GM13977 (cell line): ENCODE measurements at regions of chr7 and their contacts with region 1.

Region 1: DNA sequence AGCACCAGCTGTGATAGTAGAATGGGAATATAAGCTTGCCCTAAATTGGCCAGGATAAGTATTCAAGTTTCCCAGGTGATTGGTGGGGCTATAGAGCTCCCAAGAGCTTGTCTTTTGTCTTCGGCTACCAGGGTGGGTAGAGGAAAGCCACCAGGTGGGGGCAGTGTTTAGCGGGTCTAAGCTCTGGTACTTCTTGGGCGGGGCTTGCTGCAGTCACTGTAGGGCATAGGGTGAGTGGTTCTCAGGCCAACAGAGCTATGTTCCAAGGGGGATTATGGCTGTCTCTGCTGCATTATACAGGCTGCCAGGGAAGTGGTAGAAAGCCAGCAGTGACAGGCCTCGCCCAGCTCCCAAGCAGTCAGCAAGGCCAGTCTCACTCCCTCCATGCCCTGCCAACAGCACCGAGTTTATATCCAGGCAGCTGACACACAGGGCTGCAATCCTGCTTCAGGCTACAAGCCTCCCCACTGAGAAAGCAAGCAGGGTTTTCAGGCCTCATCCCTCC is 110.7 kb downstream of the ZNF467 start:
- DNase-seq: peak; percentile 42
- CTCF ChIP-seq: peak; percentile 63

Region 2: DNA sequence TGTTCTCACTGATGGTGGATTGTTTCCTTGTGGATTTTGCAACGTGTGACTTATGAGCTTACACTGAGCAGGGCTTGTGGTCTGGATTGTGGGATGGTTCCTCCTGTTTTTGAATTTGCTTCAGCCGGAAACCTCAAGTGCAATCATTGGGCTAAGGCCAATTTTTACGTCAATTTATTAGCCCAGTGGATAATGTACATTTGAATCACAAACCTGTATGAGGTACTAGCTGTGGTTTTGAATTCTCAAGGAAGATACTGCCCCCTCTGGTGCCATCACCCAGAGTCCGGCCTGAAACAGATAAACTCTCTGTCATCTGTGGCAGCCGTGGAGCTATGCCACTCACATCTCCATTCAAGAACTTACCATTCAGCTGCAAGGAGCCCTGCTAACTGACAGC is 194.4 kb before region 1 on chr7:
- in situ Hi-C with region 1: no loop called
- DNase-seq: no peak
- CTCF ChIP-seq: no peak

Region 3: GRCh38 chr7:149547126-149547525 is 115.5 kb before region 1 on chr7:
- in situ Hi-C with region 1: no loop called
- DNase-seq: no peak
- CTCF ChIP-seq: peak; percentile 26

Region 4: DNA sequence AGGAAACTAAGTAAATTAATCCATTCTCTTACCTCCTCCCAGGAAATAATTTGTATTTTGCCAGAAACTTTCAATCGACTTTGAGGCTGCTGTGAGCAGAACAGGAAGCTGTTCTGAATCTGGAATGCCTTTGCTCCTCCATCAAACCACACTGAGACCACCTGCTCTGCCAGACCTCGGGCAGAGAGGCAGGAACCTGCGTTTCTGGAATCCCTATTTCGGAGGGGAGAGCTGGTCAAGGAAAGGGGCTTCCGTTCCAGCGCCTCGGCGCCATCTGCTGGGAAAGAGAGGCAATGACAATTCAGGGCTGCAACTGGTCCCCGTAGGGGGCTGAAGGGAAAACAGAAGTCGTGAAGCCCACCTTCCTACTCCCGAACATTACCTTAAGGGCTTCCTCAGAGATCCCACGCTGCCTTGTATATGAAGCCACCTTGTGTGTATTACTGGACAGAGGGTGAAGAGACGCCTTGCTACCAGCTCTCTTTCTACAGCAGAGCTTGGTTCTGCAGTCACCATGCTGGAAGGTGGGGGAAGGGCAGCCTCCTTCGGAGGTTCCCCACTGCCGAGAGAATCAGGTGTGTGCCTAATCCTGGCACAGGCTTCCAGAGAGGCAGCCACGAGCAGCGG is 79.5 kb after region 1 on chr7:
- in situ Hi-C with region 1: loop called (anchors 10 kb)
- DNase-seq: peak; percentile 81
- CTCF ChIP-seq: peak; percentile 93

Region 5: DNA sequence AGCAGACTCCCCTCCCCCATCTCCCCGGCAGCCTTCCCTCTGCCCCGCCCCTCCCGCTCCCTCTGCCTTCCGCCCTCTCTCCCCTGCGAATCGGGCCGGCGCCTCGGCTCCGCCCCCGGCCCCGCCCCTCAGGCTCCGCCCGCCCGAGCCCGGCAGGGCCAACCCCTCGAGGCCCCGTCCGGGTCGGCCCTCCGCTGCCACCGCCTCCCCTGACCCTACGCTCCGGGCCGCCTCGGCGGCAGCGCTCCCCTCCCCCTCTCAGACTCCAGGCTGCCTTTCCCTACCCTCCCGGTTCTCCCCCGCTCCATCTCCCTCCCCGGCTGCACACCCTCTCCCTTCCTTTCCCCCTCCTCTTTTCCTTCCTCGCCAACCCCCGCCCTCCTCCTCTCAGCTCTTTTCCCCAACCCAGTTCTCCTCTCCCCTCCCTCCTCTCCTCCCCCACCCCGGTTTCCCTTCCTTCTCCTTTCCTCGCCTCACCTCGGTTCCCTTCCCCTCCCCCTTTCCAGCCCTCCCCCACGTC is 109.1 kb after region 1 on chr7:
- in situ Hi-C with region 1: no loop called
- DNase-seq: peak; percentile 97
- CTCF ChIP-seq: no peak